Activated CD8-positive, alpha-beta memory T cell treated with anti-CD3 and anti-CD28 coated beads, Interleukin-2, amount 10 ng/mL, durations not matched to agents 7 days and 5 days (primary cell): ENCODE measurements at regions of chr11 and their contacts with region 1.

Region 1: GRCh38 chr11:67126986-67127385 is 7.9 kb downstream of the KDM2A start:
- DNase-seq: no peak
- ATAC-seq: no peak
- H3K4me3 Mint-ChIP-seq: no peak overlapping the region
- H3K27ac Mint-ChIP-seq: no peak overlapping the region
- H3K4me1 Mint-ChIP-seq: peaks cover 21% of the 10 kb centered on the region
- H3K27me3 Mint-ChIP-seq: no peaks in the 10 kb centered on the region

Region 2: GRCh38 chr11:67146516-67147226 is 19.7 kb after region 1 on chr11:
- CTCF ChIA-PET with region 1: no interaction called
- DNase-seq: no peak
- ATAC-seq: no peak
- H3K4me3 Mint-ChIP-seq: no peak overlapping the region
- H3K27ac Mint-ChIP-seq: no peak overlapping the region
- H3K4me1 Mint-ChIP-seq: peaks cover 2% of the 10 kb centered on the region
- H3K27me3 Mint-ChIP-seq: no peaks in the 10 kb centered on the region

Region 3: DNA sequence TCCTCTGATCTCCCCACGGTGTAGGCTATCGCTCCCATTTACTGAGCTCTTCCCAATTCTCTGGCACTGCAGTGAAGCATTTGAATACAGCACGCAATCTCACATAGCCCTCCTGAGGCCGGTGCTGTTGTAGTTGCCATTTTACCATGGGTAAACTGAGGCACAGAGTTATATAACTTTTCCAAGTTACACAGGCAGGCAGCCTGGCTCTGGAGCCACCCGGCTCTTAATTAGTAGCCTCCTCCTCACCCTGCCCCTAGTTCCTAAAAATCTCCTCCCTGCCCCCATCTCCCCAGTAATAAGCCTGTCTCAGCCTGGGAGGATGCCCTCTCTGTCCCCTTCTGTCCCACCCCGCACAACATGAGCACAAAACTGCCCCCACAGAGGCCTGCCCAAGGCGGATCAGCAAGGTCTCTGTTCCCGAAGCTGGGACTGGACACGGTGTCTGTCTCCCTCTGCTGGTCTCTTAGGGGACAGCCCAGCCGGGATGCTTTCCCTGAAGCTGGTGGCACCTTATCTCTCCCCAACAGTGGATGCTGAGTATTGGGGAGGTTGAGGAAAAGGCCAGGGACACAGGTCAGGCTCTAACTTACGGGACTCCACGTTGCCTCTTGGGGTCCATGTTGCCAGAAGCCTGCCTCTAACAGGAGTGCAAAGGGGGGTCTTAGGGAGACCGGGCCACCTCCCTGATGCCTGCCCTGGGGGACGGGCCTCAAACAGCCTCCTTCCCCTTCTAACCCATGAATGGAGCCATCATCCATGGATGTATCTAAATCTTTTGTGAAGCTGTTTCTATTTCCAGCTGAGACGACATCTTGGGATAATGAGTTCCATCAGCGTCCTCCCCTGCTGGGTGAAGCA is 255.5 kb after region 1 on chr11:
- CTCF ChIA-PET with region 1: interaction called, 10 read pairs
- DNase-seq: peak; percentile 90
- ATAC-seq: peak; percentile 94
- H3K4me3 Mint-ChIP-seq: no peak overlapping the region
- H3K27ac Mint-ChIP-seq: no peak overlapping the region
- H3K4me1 Mint-ChIP-seq: peaks cover 5% of the 10 kb centered on the region
- H3K27me3 Mint-ChIP-seq: peaks cover 38% of the 10 kb centered on the region